ENCODE measurements at regions of chr3 and their contacts with region 1.

Region 1: DNA sequence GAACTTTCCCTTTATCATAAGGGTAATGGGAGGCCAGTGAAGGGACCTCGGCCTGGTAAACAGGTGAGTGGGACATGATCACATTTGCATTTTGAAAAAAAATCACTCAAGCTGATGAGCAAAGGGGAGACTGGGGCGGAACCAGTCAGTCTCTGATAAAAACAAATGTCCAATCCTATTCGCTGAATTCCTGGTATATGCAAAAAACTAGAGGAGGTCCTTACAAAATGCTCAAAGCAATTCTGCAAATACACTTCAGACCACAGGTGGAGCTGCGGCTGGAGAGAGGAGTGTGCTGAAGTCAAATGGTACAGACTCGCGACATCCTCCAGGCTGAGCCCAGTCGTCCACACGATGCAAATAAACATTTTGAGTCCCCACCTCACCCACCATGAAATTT is 166.7 kb downstream of the FOXP1 start:
- DNase-seq: peak; percentile 33 to 55 (median 49)
- H3K4me3 ChIP-seq: no peak overlapping the region
- H3K4me3 Mint-ChIP-seq: peak overlapping the region in 7 of 8 donors; percentile 30 to 83 (median 63)
- H3K27ac ChIP-seq: no peak overlapping the region
- H3K27ac Mint-ChIP-seq: peak overlapping the region; percentile 75 to 95 (median 85)
- H3K4me1 ChIP-seq: peaks cover 77% of the 10 kb centered on the region
- H3K4me1 Mint-ChIP-seq: peaks cover 55 to 93% (median 74%) of the 10 kb centered on the region in 4 donors
- H3K27me3 ChIP-seq: no peaks in the 10 kb centered on the region
- H3K27me3 Mint-ChIP-seq: no peaks in the 10 kb centered on the region

Region 2: GRCh38 chr3:71430941-71431552 is 14.2 kb after region 1 on chr3:
- CTCF ChIA-PET with region 1: interaction called, 6 read pairs
- POLR2A ChIA-PET with region 1: interaction called, 7 read pairs
- intact Hi-C with region 1: loop called (anchors 1 kb)
- DNase-seq: no peak
- H3K4me3 ChIP-seq: no peak overlapping the region
- H3K4me3 Mint-ChIP-seq: peak overlapping the region in 5 of 8 donors; percentile 17 to 61 (median 40)
- H3K27ac ChIP-seq: no peak overlapping the region
- H3K27ac Mint-ChIP-seq: peak overlapping the region in 6 of 7 donors; percentile 14 to 96 (median 85)
- H3K4me1 ChIP-seq: peaks cover 78% of the 10 kb centered on the region
- H3K4me1 Mint-ChIP-seq: peaks cover 69 to 92% (median 80%) of the 10 kb centered on the region in 4 donors
- H3K27me3 ChIP-seq: no peaks in the 10 kb centered on the region
- H3K27me3 Mint-ChIP-seq: no peaks in the 10 kb centered on the region